Body of pancreas (tissue), 4 donors: ENCODE measurements at regions of chr16 and their contacts with region 1.

Region 1: GRCh38 chr16:73560497-73560896 is 512.6 kb upstream of the ZFHX3 start:
- DNase-seq: no peak
- ATAC-seq: no peak
- H3K4me3 ChIP-seq: no peak overlapping the region
- H3K27ac ChIP-seq: no peak overlapping the region
- H3K4me1 ChIP-seq: no peaks in the 10 kb centered on the region
- H3K27me3 ChIP-seq: no peaks in the 10 kb centered on the region
- CTCF ChIP-seq: no peak
- POLR2A ChIP-seq: no peak

Region 2: GRCh38 chr16:73527182-73527581 is 33.3 kb before region 1 on chr16:
- intact Hi-C with region 1: no loop called
- DNase-seq: no peak
- ATAC-seq: no peak
- H3K4me3 ChIP-seq: no peak overlapping the region
- H3K27ac ChIP-seq: no peak overlapping the region
- H3K4me1 ChIP-seq: no peaks in the 10 kb centered on the region
- H3K27me3 ChIP-seq: no peaks in the 10 kb centered on the region
- CTCF ChIP-seq: no peak
- POLR2A ChIP-seq: no peak

Region 3: GRCh38 chr16:73882033-73882432 is 321.5 kb after region 1 on chr16:
- intact Hi-C with region 1: loop called (anchors 5 kb)
- DNase-seq: no peak
- ATAC-seq: no peak
- H3K4me3 ChIP-seq: no peak overlapping the region
- H3K27ac ChIP-seq: no peak overlapping the region
- H3K4me1 ChIP-seq: no peaks in the 10 kb centered on the region
- H3K27me3 ChIP-seq: no peaks in the 10 kb centered on the region
- CTCF ChIP-seq: no peak
- POLR2A ChIP-seq: no peak